Activated CD4-positive, alpha-beta memory T cell treated with anti-CD3 and anti-CD28 coated beads for 36 hours (primary cell): ENCODE measurements at regions of chr11 and their contacts with region 1.

Region 1: DNA sequence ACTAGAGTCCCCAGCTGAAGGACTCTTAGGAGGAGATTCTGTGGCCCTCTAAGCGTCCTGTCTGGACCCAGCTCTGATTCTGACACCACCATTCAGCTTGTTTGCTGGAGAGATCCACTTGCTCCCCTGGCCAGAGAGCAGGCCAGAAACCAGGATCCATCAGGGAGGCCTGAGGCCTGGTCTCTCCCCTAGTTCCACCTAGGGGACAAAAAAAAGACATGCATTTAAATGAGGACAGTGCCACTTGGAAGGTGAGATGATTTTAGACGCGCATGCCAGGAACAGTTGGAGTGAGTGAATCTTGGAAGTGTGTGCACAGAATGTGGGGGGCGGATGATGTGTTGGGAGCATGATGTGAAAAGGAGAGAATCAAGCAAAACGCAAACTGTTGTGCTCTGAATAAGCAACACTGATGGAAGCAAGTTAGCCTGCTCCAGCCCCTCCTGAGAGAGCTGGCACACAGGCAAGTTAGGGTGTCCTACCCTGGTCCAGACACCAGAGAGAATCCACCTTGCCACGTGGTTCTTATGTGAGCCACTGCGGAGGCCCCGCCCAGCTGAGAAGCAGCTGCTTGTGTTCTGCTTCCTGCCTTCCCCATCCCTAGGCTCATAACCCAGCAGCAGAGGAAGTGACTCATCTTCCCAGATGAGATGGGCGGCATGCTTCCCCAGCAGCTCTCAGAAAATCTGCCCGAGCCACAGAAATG is 8.0 kb upstream of the SLCO2B1 start:
- DNase-seq: peak; percentile 89
- H3K4me3 Mint-ChIP-seq: no peak overlapping the region
- H3K27ac Mint-ChIP-seq: peak overlapping the region; percentile 75
- H3K4me1 Mint-ChIP-seq: peaks cover 19% of the 10 kb centered on the region
- H3K27me3 Mint-ChIP-seq: peaks cover 3% of the 10 kb centered on the region

Region 2: GRCh38 chr11:74820763-74821162 is 322.1 kb before region 1 on chr11:
- CTCF ChIA-PET with region 1: no interaction called
- POLR2A ChIA-PET with region 1: no interaction called
- intact Hi-C with region 1: no loop called
- DNase-seq: no peak
- H3K4me3 Mint-ChIP-seq: no peak overlapping the region
- H3K27ac Mint-ChIP-seq: no peak overlapping the region
- H3K4me1 Mint-ChIP-seq: peaks cover 22% of the 10 kb centered on the region
- H3K27me3 Mint-ChIP-seq: no peaks in the 10 kb centered on the region

Region 3: GRCh38 chr11:74929431-74930363 is 213.2 kb before region 1 on chr11:
- CTCF ChIA-PET with region 1: interaction called, 75 read pairs
- POLR2A ChIA-PET with region 1: no interaction called
- intact Hi-C with region 1: loop called (anchors 2 kb)
- DNase-seq: peak; percentile 69
- H3K4me3 Mint-ChIP-seq: no peak overlapping the region
- H3K27ac Mint-ChIP-seq: no peak overlapping the region
- H3K4me1 Mint-ChIP-seq: peaks cover 14% of the 10 kb centered on the region
- H3K27me3 Mint-ChIP-seq: no peaks in the 10 kb centered on the region

Region 4: GRCh38 chr11:75160192-75160757 is 17.4 kb after region 1 on chr11:
- CTCF ChIA-PET with region 1: interaction called, 18 read pairs
- POLR2A ChIA-PET with region 1: no interaction called
- intact Hi-C with region 1: no loop called
- DNase-seq: no peak
- H3K4me3 Mint-ChIP-seq: no peak overlapping the region
- H3K27ac Mint-ChIP-seq: no peak overlapping the region
- H3K4me1 Mint-ChIP-seq: no peaks in the 10 kb centered on the region
- H3K27me3 Mint-ChIP-seq: no peaks in the 10 kb centered on the region

Region 5: GRCh38 chr11:75195121-75195551 is 52.3 kb after region 1 on chr11:
- CTCF ChIA-PET with region 1: interaction called, 559 read pairs
- POLR2A ChIA-PET with region 1: no interaction called
- intact Hi-C with region 1: no loop called
- DNase-seq: no peak
- H3K4me3 Mint-ChIP-seq: no peak overlapping the region
- H3K27ac Mint-ChIP-seq: no peak overlapping the region
- H3K4me1 Mint-ChIP-seq: no peaks in the 10 kb centered on the region
- H3K27me3 Mint-ChIP-seq: no peaks in the 10 kb centered on the region

Region 6: DNA sequence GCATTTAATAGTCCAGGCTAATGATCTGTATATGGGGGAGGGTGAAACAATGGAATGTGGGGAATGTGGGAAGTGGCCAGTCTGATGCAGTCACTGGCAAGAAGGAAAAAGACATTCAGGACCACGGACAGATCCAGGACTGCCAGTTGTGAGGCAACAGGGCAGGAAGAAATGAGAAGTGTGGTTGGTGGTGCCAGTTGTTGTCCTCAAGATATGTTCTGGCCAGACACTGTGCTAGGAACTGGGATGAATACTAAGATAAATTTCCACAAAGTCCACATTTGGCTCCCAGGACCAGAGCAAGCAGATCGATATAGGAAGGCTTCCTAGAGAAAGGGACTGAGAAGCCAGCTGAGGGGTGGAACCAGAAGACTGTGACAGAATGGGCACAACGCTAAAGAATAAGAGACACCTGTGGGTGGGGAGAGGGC is 90.9 kb after region 1 on chr11:
- CTCF ChIA-PET with region 1: interaction called, 212 read pairs
- POLR2A ChIA-PET with region 1: no interaction called
- intact Hi-C with region 1: no loop called
- DNase-seq: no peak
- H3K4me3 Mint-ChIP-seq: no peak overlapping the region
- H3K27ac Mint-ChIP-seq: no peak overlapping the region
- H3K4me1 Mint-ChIP-seq: no peaks in the 10 kb centered on the region
- H3K27me3 Mint-ChIP-seq: peaks cover 18% of the 10 kb centered on the region